Activated CD4-positive, alpha-beta T cell treated with anti-CD3 and anti-CD28 coated beads for 36 hours (primary cell): ENCODE measurements at regions of chr1 and their contacts with region 1.

Region 1: GRCh38 chr1:19485362-19486187 is at the start of gene CAPZB:
- DNase-seq: peak; percentile 98
- ATAC-seq: peak; percentile 87
- H3K4me3 Mint-ChIP-seq: peak within 1 kb of the TSS; percentile 96
- H3K27ac Mint-ChIP-seq: peak within 1 kb of the TSS; percentile 94
- H3K4me1 Mint-ChIP-seq: peaks cover 59% of the 10 kb centered on the region
- H3K27me3 Mint-ChIP-seq: no peaks in the 10 kb centered on the region
- total RNA-seq, gene CAPZB: 320 to 346 TPM

Region 2: GRCh38 chr1:18949686-18950400 is 535.7 kb before region 1 on chr1:
- CTCF ChIA-PET with region 1: no interaction called
- POLR2A ChIA-PET with region 1: no interaction called
- intact Hi-C with region 1: loop called in 1 of 2 experiments (anchors 1 kb)
- DNase-seq: peak; percentile 64
- ATAC-seq: no peak
- H3K4me3 Mint-ChIP-seq: peak overlapping the region; percentile 86
- H3K27ac Mint-ChIP-seq: peak overlapping the region; percentile 92
- H3K4me1 Mint-ChIP-seq: peaks cover 93% of the 10 kb centered on the region
- H3K27me3 Mint-ChIP-seq: no peaks in the 10 kb centered on the region

Region 3: GRCh38 chr1:19311959-19312781 is 173.4 kb before region 1 on chr1 and contains the starts of genes AKR7A2 and SLC66A1:
- CTCF ChIA-PET with region 1: no interaction called
- POLR2A ChIA-PET with region 1: interaction called, 3 read pairs
- intact Hi-C with region 1: loop called in 1 of 2 experiments (anchors 1 kb)
- DNase-seq: peak; percentile 95
- ATAC-seq: peak; percentile 97
- H3K4me3 Mint-ChIP-seq: peak within 1 kb of the TSS; percentile 78
- H3K27ac Mint-ChIP-seq: peak within 1 kb of the TSS; percentile 61
- H3K4me1 Mint-ChIP-seq: peaks cover 23% of the 10 kb centered on the region
- H3K27me3 Mint-ChIP-seq: no peaks in the 10 kb centered on the region
- total RNA-seq, gene AKR7A2: 41.3 to 43.0 TPM
- total RNA-seq, gene SLC66A1: 5.9 to 6.5 TPM

Region 4: DNA sequence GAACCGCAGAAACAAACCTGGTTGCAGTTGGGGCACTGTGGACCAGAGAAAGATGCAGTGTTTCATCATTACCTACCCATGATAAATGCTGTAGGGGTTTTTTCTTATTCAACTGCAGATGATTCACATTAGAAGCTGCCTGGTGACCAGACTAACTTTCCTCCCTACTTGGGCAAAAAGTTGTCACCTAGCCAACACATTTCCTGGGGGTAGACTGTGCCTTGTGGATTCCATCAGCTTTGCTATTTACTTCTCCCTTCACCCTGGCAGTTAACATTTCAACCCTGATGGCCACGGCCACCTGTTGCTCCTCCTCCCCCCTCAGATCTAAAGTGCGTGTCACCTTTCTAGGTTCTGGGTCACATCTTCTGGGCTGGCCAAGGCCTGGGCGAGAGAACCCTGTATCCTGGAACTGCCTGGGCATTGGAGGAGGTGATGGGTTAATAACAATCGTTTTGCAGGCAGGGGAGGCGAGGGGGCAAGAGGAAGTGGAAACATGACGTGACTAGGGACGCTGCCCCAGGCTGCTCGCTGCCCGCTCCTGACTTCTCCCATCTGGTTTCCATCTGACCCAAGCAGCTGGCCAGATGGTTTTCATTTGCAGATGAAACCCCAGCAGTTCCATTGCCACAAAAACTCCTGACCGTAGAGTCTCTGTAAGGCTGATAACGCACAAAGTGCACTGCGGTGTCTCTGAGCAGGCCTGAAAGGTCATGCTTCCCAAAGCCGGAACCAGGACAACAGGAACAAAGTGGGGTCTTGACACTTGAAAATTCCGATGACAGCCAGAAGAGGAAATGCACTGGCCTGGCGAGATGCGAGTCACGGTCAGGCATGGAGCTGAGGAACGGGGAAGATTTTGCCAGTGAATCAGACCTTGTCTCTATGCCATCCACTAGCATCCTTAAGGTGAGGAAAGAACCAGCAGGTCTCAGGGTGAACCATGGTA is 36.8 kb before region 1 on chr1:
- CTCF ChIA-PET with region 1: interaction called, 6 read pairs
- POLR2A ChIA-PET with region 1: interaction called, 3 read pairs
- intact Hi-C with region 1: loop called (anchors 5 kb)
- DNase-seq: peak; percentile 65
- ATAC-seq: peak; percentile 77
- H3K4me3 Mint-ChIP-seq: peak overlapping the region; percentile 6
- H3K27ac Mint-ChIP-seq: peak overlapping the region; percentile 92
- H3K4me1 Mint-ChIP-seq: peaks cover 91% of the 10 kb centered on the region
- H3K27me3 Mint-ChIP-seq: no peaks in the 10 kb centered on the region

Region 5: DNA sequence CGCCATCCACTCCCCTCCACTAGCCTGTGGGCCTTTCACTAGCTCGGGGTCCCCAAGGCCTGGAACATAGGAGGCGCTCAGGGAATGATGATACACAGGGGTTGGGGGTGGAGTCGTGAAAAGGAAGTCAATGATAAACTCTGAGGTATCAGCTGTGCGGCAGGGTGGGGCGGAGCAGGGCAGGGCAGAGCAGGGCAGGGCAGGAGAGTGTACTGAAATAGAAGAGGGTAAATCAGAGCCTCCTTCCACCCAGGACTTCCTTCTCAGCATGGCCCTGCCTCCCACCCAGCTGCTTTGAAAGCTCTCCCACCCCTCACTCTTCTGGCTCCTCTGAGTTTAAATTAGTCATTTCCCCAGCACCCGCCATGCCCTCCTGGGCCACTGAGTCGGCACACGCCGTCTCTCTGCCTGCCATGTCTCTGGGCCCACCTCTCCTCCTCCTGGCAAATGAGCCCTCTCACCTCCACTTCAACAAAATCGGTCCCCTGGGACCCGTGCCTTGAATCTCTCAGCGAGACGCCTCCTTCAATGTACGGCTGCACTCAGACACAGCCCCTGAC is 17.1 kb before region 1 on chr1:
- CTCF ChIA-PET with region 1: interaction called, 15 read pairs
- POLR2A ChIA-PET with region 1: interaction called, 7 read pairs
- intact Hi-C with region 1: loop called (anchors 1 to 2 kb)
- DNase-seq: peak; percentile 82
- ATAC-seq: peak; percentile 81
- H3K4me3 Mint-ChIP-seq: peak overlapping the region; percentile 56
- H3K27ac Mint-ChIP-seq: peak overlapping the region; percentile 88
- H3K4me1 Mint-ChIP-seq: peaks cover 91% of the 10 kb centered on the region
- H3K27me3 Mint-ChIP-seq: no peaks in the 10 kb centered on the region

Region 6: GRCh38 chr1:19596714-19597495 is 111.3 kb after region 1 on chr1:
- CTCF ChIA-PET with region 1: interaction called, 3 read pairs
- POLR2A ChIA-PET with region 1: no interaction called
- intact Hi-C with region 1: loop called (anchors 1 to 2 kb)
- DNase-seq: peak; percentile 98
- ATAC-seq: peak; percentile 86
- H3K4me3 Mint-ChIP-seq: peak overlapping the region; percentile 100
- H3K27ac Mint-ChIP-seq: peak overlapping the region; percentile 99
- H3K4me1 Mint-ChIP-seq: peaks cover 44% of the 10 kb centered on the region
- H3K27me3 Mint-ChIP-seq: no peaks in the 10 kb centered on the region

Region 7: GRCh38 chr1:19651141-19651737 is 165.7 kb after region 1 on chr1:
- CTCF ChIA-PET with region 1: interaction called, 5 read pairs
- POLR2A ChIA-PET with region 1: no interaction called
- intact Hi-C with region 1: loop called (anchors 1 to 5 kb)
- DNase-seq: peak; percentile 73
- ATAC-seq: peak; percentile 72
- H3K4me3 Mint-ChIP-seq: no peak overlapping the region
- H3K27ac Mint-ChIP-seq: no peak overlapping the region
- H3K4me1 Mint-ChIP-seq: peaks cover 18% of the 10 kb centered on the region
- H3K27me3 Mint-ChIP-seq: no peaks in the 10 kb centered on the region